ENCODE measurements at regions of chr3 and their contacts with region 1.

Region 1: GRCh38 chr3:41893977-41894376 is 67.9 kb downstream of the ULK4 start:
- DNase-seq: peak; percentile 51
- ATAC-seq: peak; percentile 58; the same call in 1 of the 2 replicates
- H3K4me3 ChIP-seq: no peak overlapping the region
- H3K27ac ChIP-seq: no peak overlapping the region
- H3K4me1 ChIP-seq: no peaks in the 10 kb centered on the region
- H3K27me3 ChIP-seq: no peaks in the 10 kb centered on the region
- CTCF ChIP-seq: peak; percentile 30 to 72 (median 61)
- POLR2A ChIP-seq: no peak
- RAD21 ChIP-seq: peak; percentile 81

Region 2: DNA sequence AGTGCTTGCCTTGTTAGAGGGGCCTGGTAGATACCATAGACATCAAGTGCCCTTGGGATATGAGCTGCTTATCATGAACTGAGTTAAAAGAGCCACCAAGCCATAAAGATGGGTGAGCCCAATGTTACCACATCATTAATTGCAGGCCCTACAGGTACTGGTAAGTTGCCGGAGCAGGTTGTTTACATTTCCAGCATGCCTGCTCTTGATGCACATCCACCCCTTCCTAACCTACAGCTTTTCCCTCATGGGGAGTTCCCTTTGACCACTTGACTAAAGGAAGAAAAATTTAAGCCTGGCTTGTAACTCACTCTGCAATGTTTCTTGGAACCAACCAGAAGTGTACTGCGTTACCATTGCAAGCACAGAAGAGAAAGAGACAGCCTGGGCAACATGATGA is 92.6 kb after region 1 on chr3:
- CTCF ChIA-PET with region 1: no interaction called
- POLR2A ChIA-PET with region 1: no interaction called
- RAD21 ChIA-PET with region 1: no interaction called
- intact Hi-C with region 1: no loop called
- DNase-seq: no peak
- ATAC-seq: no peak
- H3K4me3 ChIP-seq: no peak overlapping the region
- H3K27ac ChIP-seq: no peak overlapping the region
- H3K4me1 ChIP-seq: no peaks in the 10 kb centered on the region
- H3K27me3 ChIP-seq: no peaks in the 10 kb centered on the region
- CTCF ChIP-seq: no peak
- POLR2A ChIP-seq: no peak
- RAD21 ChIP-seq: no peak

Region 3: GRCh38 chr3:42101048-42101447 is 207.1 kb after region 1 on chr3:
- CTCF ChIA-PET with region 1: interaction called, 26 read pairs
- POLR2A ChIA-PET with region 1: no interaction called
- RAD21 ChIA-PET with region 1: no interaction called
- intact Hi-C with region 1: loop called (anchors 1 kb)
- DNase-seq: no peak
- ATAC-seq: no peak
- H3K4me3 ChIP-seq: no peak overlapping the region
- H3K27ac ChIP-seq: no peak overlapping the region
- H3K4me1 ChIP-seq: peaks cover 10 to 13% of the 10 kb centered on the region in 2 experiments; a peak in 3 of 4 replicates
- H3K27me3 ChIP-seq: no peaks in the 10 kb centered on the region
- CTCF ChIP-seq: no peak
- POLR2A ChIP-seq: no peak
- RAD21 ChIP-seq: no peak

Region 4: DNA sequence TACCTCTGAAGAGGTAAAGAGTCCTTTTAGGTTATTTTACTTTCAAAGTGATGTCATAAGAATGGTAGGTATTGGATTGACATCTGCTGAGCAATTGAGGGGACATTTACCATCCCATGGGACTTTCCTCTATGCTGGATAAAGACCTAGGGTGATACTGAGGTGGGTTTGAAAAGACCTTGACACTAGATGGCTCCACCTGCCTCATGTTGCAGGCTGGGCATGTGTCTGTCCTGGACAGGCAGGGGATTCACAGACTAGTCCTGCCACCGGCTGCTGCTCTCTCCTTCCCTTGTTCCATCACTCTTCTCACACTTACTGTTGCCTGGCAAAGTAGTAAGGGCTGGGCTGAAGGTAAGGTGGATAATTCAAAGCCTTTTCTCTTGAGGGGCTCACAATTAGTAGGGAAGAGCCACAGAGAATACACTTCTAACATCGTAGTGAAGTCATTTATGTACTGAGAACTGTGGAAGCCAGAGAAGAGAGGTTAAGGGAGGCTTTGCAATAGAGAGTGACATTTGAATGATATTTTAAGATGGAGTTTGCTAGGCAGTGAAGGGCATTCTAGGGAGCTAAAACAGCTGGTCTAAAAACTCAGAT is 224.9 kb after region 1 on chr3:
- CTCF ChIA-PET with region 1: interaction called, 6 read pairs
- POLR2A ChIA-PET with region 1: no interaction called
- RAD21 ChIA-PET with region 1: no interaction called
- intact Hi-C with region 1: loop called (anchors 5 kb)
- DNase-seq: peak; percentile 47
- ATAC-seq: peak; percentile 86
- H3K4me3 ChIP-seq: no peak overlapping the region
- H3K27ac ChIP-seq: no peak overlapping the region
- H3K4me1 ChIP-seq: peaks cover 40 to 51% of the 10 kb centered on the region in 2 experiments
- H3K27me3 ChIP-seq: no peaks in the 10 kb centered on the region
- CTCF ChIP-seq: peak; percentile 66 to 79 (median 67); a peak in 5 of 6 replicates
- POLR2A ChIP-seq: no peak
- RAD21 ChIP-seq: peak; percentile 84

Region 5: GRCh38 chr3:42539869-42540714 is 646.1 kb after region 1 on chr3:
- CTCF ChIA-PET with region 1: no interaction called
- POLR2A ChIA-PET with region 1: no interaction called
- RAD21 ChIA-PET with region 1: no interaction called
- intact Hi-C with region 1: loop called (anchors 5 kb)
- DNase-seq: peak; percentile 55
- ATAC-seq: peak; percentile 91
- H3K4me3 ChIP-seq: no peak overlapping the region
- H3K27ac ChIP-seq: no peak overlapping the region
- H3K4me1 ChIP-seq: peaks cover 0 to 9% of the 10 kb centered on the region in 2 experiments; a peak in 1 of 4 replicates
- H3K27me3 ChIP-seq: no peaks in the 10 kb centered on the region
- CTCF ChIP-seq: peak; percentile 68 to 92 (median 81); a peak in 5 of 6 replicates
- POLR2A ChIP-seq: no peak
- RAD21 ChIP-seq: peak; percentile 69